Posterior cingulate gyrus (tissue), 11 donors: ENCODE measurements at regions of chr11 and their contacts with region 1.

Region 1: GRCh38 chr11:7513234-7514098 is at the start of gene PPFIBP2:
- DNase-seq: peak; percentile 67 to 97 (median 82)

Region 2: GRCh38 chr11:7577291-7578190 is 64.1 kb after region 1 on chr11:
- intact Hi-C with region 1: loop called (anchors 1 kb)
- DNase-seq: peak in 9 of 10 donors; percentile 35 to 95 (median 67)

Region 3: DNA sequence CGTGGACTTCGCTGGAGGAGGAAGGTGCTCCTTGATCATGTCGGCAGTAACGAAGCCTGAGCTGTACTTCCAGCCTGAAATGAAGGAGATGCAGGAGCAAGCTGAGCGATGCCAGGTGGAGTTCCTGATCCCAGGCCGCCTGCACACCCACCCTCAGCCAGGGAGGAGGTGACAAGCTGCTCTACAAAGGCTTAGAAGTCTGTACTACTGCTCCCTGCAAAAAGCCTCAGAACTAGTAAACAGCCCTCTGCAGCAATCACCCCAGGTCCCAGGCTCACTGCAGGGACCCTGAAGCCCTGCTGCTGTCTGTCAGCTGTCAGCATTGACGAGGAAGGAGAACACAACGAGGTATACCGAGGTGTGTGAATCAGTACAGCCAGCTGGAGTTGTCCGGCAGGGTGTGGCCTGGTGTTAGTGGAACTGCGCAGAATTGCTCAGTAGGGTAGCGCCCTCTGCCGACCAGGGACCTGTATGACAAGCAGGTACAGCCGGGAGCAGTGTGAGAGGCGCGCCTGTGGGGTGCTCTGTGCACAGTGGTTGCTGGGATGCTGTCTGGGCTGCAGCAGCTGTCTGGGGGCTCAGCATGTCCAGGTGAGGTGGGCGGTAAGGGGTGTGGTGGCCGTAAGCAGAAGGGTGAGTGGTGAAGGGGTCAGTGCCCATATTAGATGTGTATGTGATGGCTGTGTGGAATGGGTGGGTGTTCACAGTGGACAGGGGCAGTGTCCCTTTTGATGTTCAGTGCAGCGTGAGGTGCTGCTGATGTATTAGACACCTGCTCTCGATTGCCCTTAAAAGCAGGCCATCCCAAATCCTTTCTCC is 152.2 kb after region 1 on chr11:
- intact Hi-C with region 1: loop called (anchors 5 kb)
- DNase-seq: peak in 9 of 10 donors; percentile 47 to 96 (median 74)